Gastrocnemius medialis (tissue), 4 donors: ENCODE measurements at regions of chr4 and their contacts with region 1.

Region 1: GRCh38 chr4:142719854-142720541 is 126.1 kb downstream of the INPP4B start:
- DNase-seq: no peak
- ATAC-seq: no peak
- H3K4me3 ChIP-seq: no peak overlapping the region
- H3K27ac ChIP-seq: no peak overlapping the region
- H3K4me1 ChIP-seq: no peaks in the 10 kb centered on the region
- H3K27me3 ChIP-seq: no peaks in the 10 kb centered on the region
- CTCF ChIP-seq: peak in 3 of 5 experiments; percentile 30 to 51 (median 36)
- POLR2A ChIP-seq: no peak

Region 2: DNA sequence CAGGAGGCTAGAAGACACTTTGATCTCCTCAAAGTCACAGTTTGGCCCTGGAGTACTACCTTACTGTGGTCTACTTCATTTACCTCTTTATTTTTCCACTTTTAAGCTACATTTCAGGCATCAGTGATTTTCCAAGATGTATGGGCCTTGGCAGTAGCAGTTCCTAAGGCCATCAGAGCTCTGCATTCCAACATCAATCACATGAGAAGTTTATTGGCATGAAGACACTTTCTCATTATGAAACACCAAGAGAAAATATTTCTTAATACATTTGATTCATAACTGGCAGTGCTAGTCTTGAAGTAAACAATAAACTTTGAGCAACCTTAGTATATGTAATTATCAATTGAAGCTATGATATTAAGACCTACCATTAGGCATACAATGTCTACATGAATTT is 905.5 kb before region 1 on chr4:
- in situ Hi-C with region 1: no loop called
- intact Hi-C with region 1: no loop called
- DNase-seq: no peak
- ATAC-seq: no peak
- H3K4me3 ChIP-seq: no peak overlapping the region
- H3K27ac ChIP-seq: no peak overlapping the region
- H3K4me1 ChIP-seq: no peaks in the 10 kb centered on the region
- H3K27me3 ChIP-seq: no peaks in the 10 kb centered on the region
- CTCF ChIP-seq: no peak
- POLR2A ChIP-seq: no peak

Region 3: GRCh38 chr4:142347241-142347640 is 372.8 kb before region 1 on chr4:
- in situ Hi-C with region 1: loop called in 2 of 4 experiments (anchors 25 kb)
- intact Hi-C with region 1: no loop called
- DNase-seq: no peak
- ATAC-seq: no peak
- H3K4me3 ChIP-seq: no peak overlapping the region
- H3K27ac ChIP-seq: no peak overlapping the region
- H3K4me1 ChIP-seq: peaks cover 26 to 42% of the 10 kb centered on the region in 2 donors
- H3K27me3 ChIP-seq: no peaks in the 10 kb centered on the region
- CTCF ChIP-seq: no peak
- POLR2A ChIP-seq: no peak

Region 4: DNA sequence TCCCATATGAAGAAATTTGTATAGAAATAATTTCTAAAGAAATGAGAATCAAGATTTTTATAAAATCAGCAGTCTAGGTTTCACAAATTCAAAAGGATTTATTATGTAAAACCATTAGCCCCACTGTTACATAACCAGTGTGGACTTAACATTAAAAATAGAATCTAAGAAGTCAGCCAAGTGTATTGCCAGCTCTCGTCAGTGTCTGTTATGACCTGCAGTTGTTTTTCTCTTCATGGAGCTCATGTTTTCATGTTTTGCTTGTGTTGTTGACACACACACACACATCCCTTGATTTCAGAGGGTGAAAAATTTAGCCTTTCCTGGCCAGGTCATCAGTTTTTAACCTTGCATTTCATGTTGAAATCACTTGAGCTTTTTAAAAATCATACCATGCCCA is 504.3 kb after region 1 on chr4:
- in situ Hi-C with region 1: no loop called
- intact Hi-C with region 1: no loop called
- DNase-seq: peak in 1 of 2 donors; percentile 14
- ATAC-seq: peak; percentile 94 to 95
- H3K4me3 ChIP-seq: no peak overlapping the region
- H3K27ac ChIP-seq: peak overlapping the region in 3 of 4 donors; percentile 38 to 62 (median 43)
- H3K4me1 ChIP-seq: peaks cover 44 to 46% of the 10 kb centered on the region in 2 donors
- H3K27me3 ChIP-seq: no peaks in the 10 kb centered on the region
- CTCF ChIP-seq: no peak
- POLR2A ChIP-seq: no peak